HAP-1 (cell line): ENCODE measurements at regions of chr17 and their contacts with region 1.

Region 1: GRCh38 chr17:46002311-46002972 is 3.4 kb downstream of the STH start:
- DNase-seq: peak; percentile 38 to 83
- H3K4me3 ChIP-seq: no peak overlapping the region
- H3K4me1 ChIP-seq: no peaks in the 10 kb centered on the region
- H3K27me3 ChIP-seq: no peaks in the 10 kb centered on the region

Region 2: DNA sequence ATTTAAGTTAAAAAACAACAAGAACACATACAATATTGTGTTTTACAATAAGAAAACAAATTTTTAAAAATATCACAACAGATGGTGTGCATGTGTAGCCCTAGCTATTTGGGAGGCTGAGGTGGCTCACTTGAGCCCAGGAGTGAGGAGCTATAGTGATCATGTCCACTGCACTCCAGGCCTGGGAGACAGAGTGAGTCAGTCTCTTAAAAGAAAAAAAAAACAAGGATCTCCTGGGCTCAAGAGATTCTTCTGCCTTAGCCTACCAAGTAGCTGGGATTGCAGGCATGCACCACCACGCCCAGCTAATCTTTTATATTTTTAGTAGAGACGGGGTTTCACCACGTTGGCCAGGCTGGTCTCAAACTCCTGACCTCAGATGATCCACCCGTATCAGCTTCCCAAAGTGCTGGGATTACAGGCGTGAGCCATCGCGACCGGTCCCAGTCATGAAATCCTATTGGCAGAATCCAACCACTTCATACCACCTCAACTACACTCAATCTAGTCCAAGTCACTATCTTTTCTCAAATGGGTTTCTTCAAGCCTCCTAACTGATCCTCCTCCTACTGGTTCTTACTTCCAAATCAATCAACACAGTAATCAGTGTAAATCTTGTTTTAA is 51.6 kb after region 1 on chr17:
- in situ Hi-C with region 1: loop called (anchors 5 kb)
- DNase-seq: no peak
- H3K4me3 ChIP-seq: no peak overlapping the region
- H3K4me1 ChIP-seq: peaks cover 25% of the 10 kb centered on the region
- H3K27me3 ChIP-seq: no peaks in the 10 kb centered on the region

Region 3: DNA sequence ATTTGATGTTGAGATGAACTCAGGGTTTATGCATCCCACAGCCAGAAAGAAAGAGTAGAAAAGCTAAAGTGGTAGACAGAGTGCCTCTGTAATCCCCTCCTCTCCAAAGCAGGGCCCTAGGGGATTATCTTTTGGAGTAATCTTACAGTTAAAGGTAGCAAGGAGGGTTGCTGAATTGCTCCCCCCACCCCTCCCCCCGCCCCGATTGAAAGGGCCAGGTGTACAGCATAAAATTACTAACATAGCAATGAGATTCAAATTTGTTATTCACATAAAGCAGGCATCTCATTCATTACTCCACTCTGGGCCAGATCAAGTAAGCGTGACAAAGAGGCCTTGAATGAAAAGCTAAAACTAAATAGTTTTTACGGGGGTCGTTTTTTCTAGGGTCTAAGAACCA is 69.4 kb after region 1 on chr17:
- in situ Hi-C with region 1: no loop called
- DNase-seq: peak; percentile 62 to 76
- H3K4me3 ChIP-seq: no peak overlapping the region
- H3K4me1 ChIP-seq: peaks cover 23% of the 10 kb centered on the region
- H3K27me3 ChIP-seq: no peaks in the 10 kb centered on the region

Region 4: DNA sequence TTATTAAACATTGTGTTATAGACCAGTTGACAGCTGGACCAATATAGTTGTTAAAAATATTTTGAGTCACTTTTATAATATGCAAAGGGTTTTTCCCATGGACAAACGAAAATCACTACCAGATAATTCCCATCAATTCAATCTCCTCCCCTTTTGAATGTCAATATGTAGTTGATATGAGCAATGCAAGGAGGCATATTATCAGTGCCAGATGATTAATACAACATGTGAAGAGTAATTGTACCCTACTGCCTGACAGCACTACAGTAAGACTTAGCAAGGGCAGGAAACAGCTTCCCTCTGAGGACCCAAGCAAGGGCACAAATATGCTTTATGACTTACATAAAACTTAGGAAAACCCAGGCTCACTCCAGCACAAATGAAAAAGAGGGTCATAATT is 173.4 kb after region 1 on chr17:
- in situ Hi-C with region 1: no loop called
- DNase-seq: no peak
- H3K4me3 ChIP-seq: no peak overlapping the region
- H3K4me1 ChIP-seq: peaks cover 29% of the 10 kb centered on the region
- H3K27me3 ChIP-seq: no peaks in the 10 kb centered on the region

Region 5: DNA sequence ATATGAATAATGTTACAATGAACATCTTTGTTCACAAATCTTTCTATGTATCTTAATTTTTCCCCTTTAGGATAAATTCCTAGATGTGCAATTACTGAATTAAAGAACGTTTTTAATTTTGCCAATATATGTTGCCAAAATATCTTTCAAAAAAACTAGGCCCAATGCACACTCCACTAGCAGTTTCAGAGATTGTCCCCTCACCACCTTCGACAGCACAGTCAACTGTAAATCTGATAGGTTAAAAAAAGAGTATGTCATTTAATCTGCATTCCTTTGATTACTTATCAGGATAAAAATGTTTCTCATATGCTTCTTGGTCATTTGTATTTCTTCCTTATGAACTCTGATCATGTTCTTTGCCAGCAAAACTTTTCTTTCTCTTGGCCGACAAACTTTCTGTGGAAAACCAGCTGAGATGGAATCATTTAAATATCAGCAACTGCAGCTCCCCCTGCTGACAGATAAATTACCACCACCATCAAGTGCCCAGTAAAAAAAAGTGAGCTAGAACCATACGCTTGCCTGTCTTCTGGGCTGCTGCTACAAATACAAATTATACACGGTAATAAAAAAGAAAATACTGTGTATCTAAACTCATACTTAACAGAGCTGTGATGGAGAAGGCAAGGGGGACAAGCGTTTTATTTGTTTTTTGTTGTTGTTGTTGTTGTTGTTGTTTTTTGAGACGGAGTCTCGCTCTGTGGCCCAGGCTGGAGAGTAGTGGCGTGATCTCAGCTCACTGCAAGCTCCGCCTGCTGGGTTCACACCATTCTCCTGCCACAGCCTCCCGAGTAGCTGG is 210.4 kb after region 1 on chr17:
- in situ Hi-C with region 1: loop called (anchors 10 kb)
- DNase-seq: peak; percentile 65 to 71
- H3K4me3 ChIP-seq: no peak overlapping the region
- H3K4me1 ChIP-seq: peaks cover 4% of the 10 kb centered on the region
- H3K27me3 ChIP-seq: no peaks in the 10 kb centered on the region